Ascending aorta (tissue), 2 donors: ENCODE measurements at regions of chr3 and their contacts with region 1.

Region 1: GRCh38 chr3:128497387-128498126 is 4.6 kb upstream of the GATA2 start:
- DNase-seq: peak in 1 of 2 donors; percentile 65
- H3K4me3 ChIP-seq: peak overlapping the region; percentile 66 to 68
- H3K27ac ChIP-seq: no peak overlapping the region
- H3K4me1 ChIP-seq: peaks cover 7 to 8% of the 10 kb centered on the region in 2 donors
- H3K27me3 ChIP-seq: peaks cover 15% of the 10 kb centered on the region
- CTCF ChIP-seq: peak; percentile 44 to 66 (median 49)

Region 2: DNA sequence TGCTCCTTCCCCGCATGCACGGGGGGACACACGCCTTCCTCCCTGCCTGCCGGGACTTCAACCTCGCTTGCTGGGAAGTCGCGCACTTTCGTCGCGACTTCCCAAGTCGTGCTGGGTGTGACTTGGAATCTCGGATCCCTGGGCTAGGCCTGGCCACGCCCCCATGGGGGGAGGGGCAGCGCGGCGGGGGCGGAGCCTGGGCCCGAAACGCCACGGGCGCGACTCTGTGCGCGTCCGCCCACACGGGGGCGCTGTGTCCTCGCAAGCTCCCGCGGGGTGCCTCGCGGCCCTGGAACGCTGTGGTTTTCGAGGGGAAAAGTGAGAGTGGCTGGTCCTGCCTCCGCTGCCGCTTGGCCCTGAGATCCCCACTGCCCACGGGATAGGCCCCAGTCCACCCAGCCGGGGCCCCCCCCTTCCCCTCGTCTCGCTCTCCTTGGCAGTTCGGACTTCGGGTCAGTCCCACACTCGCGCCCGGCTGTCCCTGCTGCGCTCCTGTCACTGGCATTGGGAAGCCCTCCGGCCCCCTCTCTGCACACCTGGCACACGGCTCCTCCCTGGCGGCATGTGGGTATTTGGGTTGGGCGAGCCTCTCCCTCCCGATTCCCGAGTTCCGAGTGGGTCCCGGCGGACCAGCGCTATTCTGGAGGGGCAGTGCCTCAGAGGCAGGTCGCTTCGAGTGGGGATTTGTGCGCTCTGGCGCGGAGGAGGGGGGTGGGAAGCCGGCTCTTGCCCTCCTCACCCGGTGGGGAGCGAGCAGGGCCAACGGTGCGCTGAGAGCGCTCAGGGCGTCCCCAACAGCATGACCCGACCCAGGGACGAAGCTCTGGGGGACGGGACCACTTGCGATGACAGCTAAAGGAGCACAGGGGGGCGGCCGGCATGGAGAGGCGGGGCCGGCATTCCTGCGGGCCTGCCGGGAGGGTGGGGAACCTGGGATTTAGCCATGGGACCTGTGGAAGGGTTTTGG is 421.8 kb before region 1 on chr3:
- intact Hi-C with region 1: loop called (anchors 10 kb)
- DNase-seq: peak in 1 of 2 donors; percentile 91
- H3K4me3 ChIP-seq: peak overlapping the region; percentile 57 to 71
- H3K27ac ChIP-seq: peak overlapping the region; percentile 9 to 53
- H3K4me1 ChIP-seq: peaks cover 0 to 15% of the 10 kb centered on the region in 2 donors
- H3K27me3 ChIP-seq: no peaks in the 10 kb centered on the region
- CTCF ChIP-seq: peak; percentile 91 to 97 (median 96)

Region 3: DNA sequence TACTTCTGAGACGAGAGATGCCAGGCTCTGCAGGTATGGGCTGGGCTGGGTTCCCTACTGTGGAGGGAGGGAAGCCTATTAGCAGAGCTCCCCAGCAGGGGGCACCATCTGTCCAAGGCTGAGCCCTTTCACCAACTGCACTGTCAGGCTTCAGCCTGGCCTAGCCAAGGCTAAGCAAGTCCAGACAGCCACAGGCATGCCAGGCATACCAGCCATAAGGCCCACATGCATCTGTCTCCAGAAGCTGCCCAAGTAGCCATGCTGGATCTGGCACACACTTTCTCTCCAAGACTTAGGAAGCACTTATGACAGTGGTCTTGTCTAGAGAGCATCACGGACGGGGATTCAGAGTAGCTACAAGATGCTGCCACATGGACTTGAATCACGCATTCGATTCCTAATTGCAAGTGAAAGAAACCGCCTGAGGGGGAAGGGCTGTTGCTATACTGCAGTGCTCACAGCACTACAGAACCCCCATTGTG is 402.3 kb before region 1 on chr3:
- intact Hi-C with region 1: loop called (anchors 5 kb)
- DNase-seq: peak in 1 of 2 donors; percentile 83
- H3K4me3 ChIP-seq: no peak overlapping the region
- H3K27ac ChIP-seq: no peak overlapping the region
- H3K4me1 ChIP-seq: peaks cover 0 to 3% of the 10 kb centered on the region in 2 donors
- H3K27me3 ChIP-seq: no peaks in the 10 kb centered on the region
- CTCF ChIP-seq: peak; percentile 70 to 72 (median 70)

Region 4: GRCh38 chr3:128170805-128171516 is 326.6 kb before region 1 on chr3:
- intact Hi-C with region 1: loop called (anchors 5 kb)
- DNase-seq: no peak
- H3K4me3 ChIP-seq: no peak overlapping the region
- H3K27ac ChIP-seq: no peak overlapping the region
- H3K4me1 ChIP-seq: no peaks in the 10 kb centered on the region
- H3K27me3 ChIP-seq: no peaks in the 10 kb centered on the region
- CTCF ChIP-seq: peak; percentile 47 to 66 (median 63)

Region 5: GRCh38 chr3:128426128-128426921 is 71.2 kb before region 1 on chr3:
- intact Hi-C with region 1: loop called (anchors 5 kb)
- DNase-seq: no peak
- H3K4me3 ChIP-seq: peak overlapping the region; percentile 28 to 53
- H3K27ac ChIP-seq: no peak overlapping the region
- H3K4me1 ChIP-seq: peaks cover 0 to 2% of the 10 kb centered on the region in 2 donors
- H3K27me3 ChIP-seq: no peaks in the 10 kb centered on the region
- CTCF ChIP-seq: peak; percentile 57 to 95 (median 72)